ENCODE measurements at regions of chr2 and their contacts with region 1.

Region 1: DNA sequence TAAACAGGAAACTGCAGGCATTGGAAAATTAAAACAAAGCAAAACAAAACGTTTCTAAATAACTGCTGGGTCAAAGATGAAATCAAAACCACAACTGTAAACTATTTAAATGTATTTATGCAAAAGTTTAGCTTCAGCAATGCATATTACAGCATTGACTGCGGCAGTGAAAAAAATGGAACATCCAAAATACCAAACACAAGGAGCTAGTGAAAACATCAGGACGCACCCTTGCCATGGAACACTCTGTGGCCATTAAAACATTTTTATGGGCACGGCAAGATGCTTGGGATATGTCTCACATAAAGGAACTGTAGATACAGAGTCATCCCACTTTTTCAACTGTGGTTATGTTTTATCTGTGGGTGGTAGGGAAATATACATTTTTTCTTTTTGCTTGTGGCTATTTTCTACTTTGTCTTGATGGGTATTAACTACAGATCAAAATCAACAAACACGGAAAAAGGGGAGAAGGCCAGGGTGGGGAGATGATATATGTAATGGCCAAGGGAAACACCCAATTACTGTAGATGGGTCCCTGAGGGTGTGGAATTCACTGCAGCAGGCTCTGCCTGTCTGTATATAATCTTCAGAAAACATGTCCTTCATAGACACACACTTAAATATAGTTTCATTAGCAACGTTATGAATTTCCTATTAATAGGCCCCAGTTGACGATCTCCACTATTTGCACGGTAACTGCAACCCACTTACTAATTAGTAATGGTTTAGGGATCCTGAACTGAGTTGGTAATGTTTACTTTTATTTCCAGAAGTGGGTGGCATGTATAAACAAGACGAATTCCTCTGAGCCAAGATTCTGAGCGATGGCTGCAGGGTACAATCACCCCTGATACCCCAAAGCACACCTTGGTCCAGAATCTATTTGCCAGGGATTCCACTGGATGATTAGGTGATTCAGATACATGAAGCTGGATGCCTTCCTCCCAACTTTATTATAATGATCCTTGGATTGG is 110.5 kb downstream of the ACKR3 start:
- DNase-seq: peak in 1 of 2 donors; percentile 7
- H3K4me3 ChIP-seq: no peak overlapping the region
- H3K27ac ChIP-seq: no peak overlapping the region
- H3K4me1 ChIP-seq: peaks cover 0 to 37% (median 21%) of the 10 kb centered on the region in 4 donors
- H3K27me3 ChIP-seq: no peaks in the 10 kb centered on the region
- CTCF ChIP-seq: no peak

Region 2: GRCh38 chr2:236352761-236353593 is 327.2 kb before region 1 on chr2:
- intact Hi-C with region 1: no loop called
- DNase-seq: no peak
- H3K4me3 ChIP-seq: no peak overlapping the region
- H3K27ac ChIP-seq: no peak overlapping the region
- H3K4me1 ChIP-seq: no peaks in the 10 kb centered on the region
- H3K27me3 ChIP-seq: peaks cover 0 to 4% of the 10 kb centered on the region in 2 donors
- CTCF ChIP-seq: peak; percentile 89 to 92

Region 3: GRCh38 chr2:236507393-236508085 is 172.6 kb before region 1 on chr2:
- intact Hi-C with region 1: no loop called
- DNase-seq: peak in 1 of 2 donors; percentile 29
- H3K4me3 ChIP-seq: peak overlapping the region; percentile 43 to 55
- H3K27ac ChIP-seq: no peak overlapping the region
- H3K4me1 ChIP-seq: peaks cover 0 to 11% (median 6%) of the 10 kb centered on the region in 4 donors
- H3K27me3 ChIP-seq: peaks cover 0 to 11% of the 10 kb centered on the region in 2 donors
- CTCF ChIP-seq: no peak

Region 4: GRCh38 chr2:237336131-237336530 is 656.0 kb after region 1 on chr2:
- intact Hi-C with region 1: loop called (anchors 5 kb)
- DNase-seq: no peak
- H3K4me3 ChIP-seq: no peak overlapping the region
- H3K27ac ChIP-seq: no peak overlapping the region
- H3K4me1 ChIP-seq: no peaks in the 10 kb centered on the region
- H3K27me3 ChIP-seq: no peaks in the 10 kb centered on the region
- CTCF ChIP-seq: no peak